ENCODE measurements at regions of chr18 and their contacts with region 1.

Region 1: GRCh38 chr18:28802546-28802945 is 625.6 kb upstream of the CDH2 start:
- DNase-seq: peak; percentile 92
- H3K4me3 ChIP-seq: peak overlapping the region in 1 of 3 experiments; percentile 17
- H3K27ac ChIP-seq: peak overlapping the region; percentile 78
- H3K4me1 ChIP-seq: peaks cover 40% of the 10 kb centered on the region
- H3K27me3 ChIP-seq: no peaks in the 10 kb centered on the region
- CTCF ChIP-seq: no peak
- POLR2A ChIP-seq: peak; percentile 19

Region 2: DNA sequence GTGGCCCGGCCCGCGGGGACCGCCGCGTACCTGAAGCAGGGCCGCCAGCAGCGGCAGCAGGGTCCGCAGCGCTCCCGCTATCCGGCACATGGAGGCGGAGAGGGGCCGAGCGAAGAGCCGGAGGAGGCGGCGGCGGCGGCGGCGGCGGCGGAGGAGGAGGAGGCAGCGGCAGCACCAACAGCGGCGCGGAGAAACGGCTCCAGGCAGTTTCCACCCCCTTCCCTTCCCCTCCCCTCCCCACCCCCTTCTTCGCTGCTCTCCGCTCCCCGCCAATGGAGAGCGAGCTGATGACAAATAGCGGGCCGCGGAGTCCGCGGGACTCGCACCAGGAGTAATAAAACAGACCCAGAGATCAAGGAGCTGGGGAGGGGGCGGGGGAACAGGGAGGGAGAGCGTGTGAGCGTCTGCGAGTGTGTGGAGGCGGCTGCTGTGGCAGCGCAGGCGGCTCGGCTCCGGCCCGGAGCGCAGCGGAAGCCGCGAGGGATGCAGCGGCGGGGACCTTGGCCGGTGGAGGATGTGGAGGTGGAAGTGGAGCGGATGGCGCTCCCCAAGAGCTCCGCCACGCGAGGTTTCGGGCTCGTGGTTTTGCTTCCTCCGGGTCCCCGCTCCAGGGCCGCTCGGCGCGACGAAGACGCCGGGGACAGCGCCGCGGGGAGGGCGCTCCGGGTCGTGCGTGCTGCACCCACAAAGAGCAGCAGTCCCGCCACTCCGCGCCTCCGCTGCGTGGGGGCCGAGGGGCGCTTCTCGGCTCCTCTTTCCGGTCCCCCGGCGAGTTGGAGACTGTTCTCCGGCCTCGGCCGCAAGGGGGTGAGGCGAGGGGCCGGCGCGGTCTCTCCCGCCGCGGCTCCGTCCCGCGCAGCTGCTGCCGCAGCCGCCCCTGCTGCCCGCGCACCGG is 625.4 kb before region 1 on chr18 and contains the start of gene CDH2:
- CTCF ChIA-PET with region 1: no interaction called
- POLR2A ChIA-PET with region 1: no interaction called
- dilution Hi-C with region 1: no loop called
- intact Hi-C with region 1: loop called (anchors 5 kb)
- DNase-seq: peak; percentile 79
- H3K4me3 ChIP-seq: peak within 1 kb of the TSS; percentile 60 to 99 (median 98)
- H3K27ac ChIP-seq: peak within 1 kb of the TSS; percentile 79
- H3K4me1 ChIP-seq: peaks cover 21% of the 10 kb centered on the region
- H3K27me3 ChIP-seq: no peaks in the 10 kb centered on the region
- CTCF ChIP-seq: peak; percentile 20 to 42
- POLR2A ChIP-seq: peak; percentile 64
- total RNA-seq, gene CDH2: 59.5 and 84.2 TPM in 2 replicates

Region 3: DNA sequence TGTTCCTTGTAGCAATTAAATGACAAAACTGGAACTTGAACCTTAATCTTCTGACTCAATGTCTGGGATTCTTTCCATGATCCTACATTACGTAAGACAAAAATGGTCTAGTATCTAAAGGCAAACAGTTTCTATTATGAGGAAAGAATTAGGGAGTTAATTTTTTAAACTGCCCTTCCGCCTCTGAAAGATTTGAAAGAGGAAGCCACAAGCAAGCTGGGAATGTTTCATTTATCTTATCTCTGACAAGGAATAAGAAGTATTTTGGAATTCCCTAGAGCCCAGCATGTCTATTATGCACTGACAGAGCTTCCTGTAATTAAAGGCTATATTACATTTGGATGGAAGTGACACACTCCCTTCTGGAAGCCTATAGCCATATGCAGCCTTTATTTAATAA is 66.8 kb before region 1 on chr18:
- CTCF ChIA-PET with region 1: no interaction called
- POLR2A ChIA-PET with region 1: no interaction called
- dilution Hi-C with region 1: no loop called
- intact Hi-C with region 1: loop called (anchors 2 kb)
- DNase-seq: peak; percentile 59
- H3K4me3 ChIP-seq: no peak overlapping the region
- H3K27ac ChIP-seq: peak overlapping the region; percentile 45
- H3K4me1 ChIP-seq: peaks cover 8% of the 10 kb centered on the region
- H3K27me3 ChIP-seq: no peaks in the 10 kb centered on the region
- CTCF ChIP-seq: no peak
- POLR2A ChIP-seq: no peak

Region 4: DNA sequence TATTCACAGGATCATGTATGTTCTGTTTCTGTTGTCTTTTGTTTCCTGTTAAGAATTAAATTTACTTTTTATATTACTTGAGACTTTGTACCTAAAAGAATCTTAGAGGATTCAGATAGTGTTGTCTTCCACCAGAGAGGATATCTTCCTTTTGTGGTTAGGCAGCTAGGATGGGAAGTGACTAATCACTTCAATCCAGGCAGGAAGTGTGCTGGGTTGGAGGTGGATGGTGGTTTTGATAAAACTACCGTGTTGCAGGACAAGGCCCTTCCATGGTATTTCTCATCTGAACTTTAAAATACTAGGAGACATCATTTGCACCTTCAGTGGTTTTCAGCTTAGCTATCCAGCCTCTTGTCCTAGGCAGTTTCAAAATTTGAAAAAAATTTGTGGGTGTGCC is 103.0 kb after region 1 on chr18:
- CTCF ChIA-PET with region 1: no interaction called
- POLR2A ChIA-PET with region 1: no interaction called
- dilution Hi-C with region 1: no loop called
- intact Hi-C with region 1: loop called (anchors 5 kb)
- DNase-seq: peak; percentile 49
- H3K4me3 ChIP-seq: no peak overlapping the region
- H3K27ac ChIP-seq: no peak overlapping the region
- H3K4me1 ChIP-seq: peaks cover 10% of the 10 kb centered on the region
- H3K27me3 ChIP-seq: no peaks in the 10 kb centered on the region
- CTCF ChIP-seq: no peak
- POLR2A ChIP-seq: no peak

Region 5: GRCh38 chr18:29012364-29012763 is 209.8 kb after region 1 on chr18:
- CTCF ChIA-PET with region 1: no interaction called
- POLR2A ChIA-PET with region 1: no interaction called
- dilution Hi-C with region 1: no loop called
- intact Hi-C with region 1: no loop called
- DNase-seq: no peak
- H3K4me3 ChIP-seq: no peak overlapping the region
- H3K27ac ChIP-seq: no peak overlapping the region
- H3K4me1 ChIP-seq: no peaks in the 10 kb centered on the region
- H3K27me3 ChIP-seq: no peaks in the 10 kb centered on the region
- CTCF ChIP-seq: no peak
- POLR2A ChIP-seq: no peak

Region 6: DNA sequence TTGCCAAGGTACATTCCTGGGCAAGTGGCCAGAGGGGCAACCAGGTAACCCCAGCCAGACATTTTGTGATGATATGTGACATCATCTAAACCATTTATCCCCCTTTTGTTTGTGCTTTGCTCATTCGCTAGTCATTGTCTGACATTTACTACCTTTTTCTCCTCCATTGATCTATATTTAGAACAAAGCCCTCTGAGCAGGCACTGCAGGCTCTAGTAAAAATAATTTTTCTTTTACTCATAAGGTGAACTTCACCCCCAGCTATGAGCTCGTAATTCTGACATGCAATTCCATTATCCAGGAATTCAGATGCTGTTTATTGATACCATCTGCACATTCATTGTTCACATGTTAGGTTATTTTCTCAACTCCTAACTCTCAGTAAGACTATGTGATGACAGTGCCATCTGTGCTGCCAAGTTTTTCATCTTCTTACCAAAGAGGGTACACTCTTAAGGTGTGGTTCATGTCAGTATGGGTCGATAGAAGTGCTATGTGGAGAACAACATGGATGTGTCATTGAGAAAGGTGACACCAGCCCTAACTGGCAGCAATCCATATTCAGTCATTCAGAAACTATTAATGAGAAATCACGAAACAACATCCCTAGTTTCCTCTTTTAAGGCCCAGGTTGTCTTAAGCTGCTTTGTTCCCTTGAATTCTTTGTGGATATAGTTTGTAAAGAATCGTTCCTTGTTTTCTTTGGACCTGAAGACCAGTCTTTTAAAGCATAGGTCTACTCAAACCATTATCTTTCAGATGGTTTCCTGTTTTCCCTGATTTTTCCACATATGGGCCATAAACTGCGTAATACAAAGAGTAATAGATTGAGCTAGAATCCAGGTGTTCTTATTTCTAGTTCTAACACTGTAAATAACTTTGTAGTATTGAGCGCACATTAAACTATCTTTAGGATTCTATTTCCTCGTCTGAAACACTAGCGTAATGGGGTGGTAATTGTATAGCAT is 352.5 kb after region 1 on chr18:
- CTCF ChIA-PET with region 1: no interaction called
- POLR2A ChIA-PET with region 1: no interaction called
- dilution Hi-C with region 1: no loop called
- intact Hi-C with region 1: loop called (anchors 1 kb)
- DNase-seq: peak; percentile 86
- H3K4me3 ChIP-seq: peak overlapping the region in 1 of 3 experiments; percentile 51
- H3K27ac ChIP-seq: peak overlapping the region; percentile 96
- H3K4me1 ChIP-seq: peaks cover 54% of the 10 kb centered on the region
- H3K27me3 ChIP-seq: no peaks in the 10 kb centered on the region
- CTCF ChIP-seq: no peak
- POLR2A ChIP-seq: peak; percentile 45